PC-9 (cell line): ENCODE measurements at regions of chr6 and their contacts with region 1.

Region 1: GRCh38 chr6:4313044-4313686 is 177.8 kb upstream of the ECI2 start:
- DNase-seq: peak; percentile 79 to 83
- H3K4me3 ChIP-seq: no peak overlapping the region
- H3K27ac ChIP-seq: peak overlapping the region; percentile 91
- H3K4me1 ChIP-seq: peaks cover 28% of the 10 kb centered on the region
- H3K27me3 ChIP-seq: no peaks in the 10 kb centered on the region
- CTCF ChIP-seq: peak; percentile 67

Region 2: DNA sequence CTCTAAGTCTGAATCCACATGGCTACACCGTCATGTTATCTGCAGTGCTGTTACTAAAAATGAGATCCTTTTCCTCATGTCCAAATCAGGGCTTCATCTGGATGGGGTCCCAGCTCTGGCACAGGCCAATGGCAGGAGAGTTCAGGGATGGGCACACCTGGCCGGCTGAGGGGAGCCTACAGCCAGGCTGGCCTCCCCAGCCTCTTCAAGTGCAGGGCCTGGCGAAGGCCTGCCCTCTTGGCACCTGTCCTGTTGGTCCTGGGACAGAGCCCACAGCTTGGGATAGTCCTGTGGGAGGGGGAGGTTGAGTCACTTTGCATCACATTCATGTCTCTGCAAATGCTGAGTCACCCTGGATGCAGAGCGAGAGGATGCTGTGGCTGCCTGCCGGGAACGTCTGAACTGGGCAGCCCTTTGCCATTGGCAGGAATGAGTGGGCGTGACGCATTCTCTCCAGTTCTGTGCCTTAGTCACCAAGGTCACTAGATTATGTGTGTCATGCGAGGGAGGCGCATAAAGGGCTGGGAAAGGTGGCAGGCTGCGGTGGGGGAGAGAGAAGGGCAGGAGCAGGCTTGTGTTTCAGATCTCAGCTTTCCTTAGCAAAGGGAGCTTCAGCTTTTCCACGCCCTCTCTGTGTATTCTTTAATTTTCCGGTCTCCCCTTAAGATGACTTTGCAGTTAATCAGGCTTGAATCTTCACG is 45.4 kb after region 1 on chr6:
- CTCF ChIA-PET with region 1: no interaction called
- POLR2A ChIA-PET with region 1: interaction called, 3 read pairs
- intact Hi-C with region 1: loop called (anchors 2 kb)
- DNase-seq: peak; percentile 98
- H3K4me3 ChIP-seq: peak overlapping the region; percentile 49; the same call in 1 of the 2 replicates
- H3K27ac ChIP-seq: peak overlapping the region; percentile 100
- H3K4me1 ChIP-seq: peaks cover 55% of the 10 kb centered on the region
- H3K27me3 ChIP-seq: no peaks in the 10 kb centered on the region
- CTCF ChIP-seq: no peak

Region 3: DNA sequence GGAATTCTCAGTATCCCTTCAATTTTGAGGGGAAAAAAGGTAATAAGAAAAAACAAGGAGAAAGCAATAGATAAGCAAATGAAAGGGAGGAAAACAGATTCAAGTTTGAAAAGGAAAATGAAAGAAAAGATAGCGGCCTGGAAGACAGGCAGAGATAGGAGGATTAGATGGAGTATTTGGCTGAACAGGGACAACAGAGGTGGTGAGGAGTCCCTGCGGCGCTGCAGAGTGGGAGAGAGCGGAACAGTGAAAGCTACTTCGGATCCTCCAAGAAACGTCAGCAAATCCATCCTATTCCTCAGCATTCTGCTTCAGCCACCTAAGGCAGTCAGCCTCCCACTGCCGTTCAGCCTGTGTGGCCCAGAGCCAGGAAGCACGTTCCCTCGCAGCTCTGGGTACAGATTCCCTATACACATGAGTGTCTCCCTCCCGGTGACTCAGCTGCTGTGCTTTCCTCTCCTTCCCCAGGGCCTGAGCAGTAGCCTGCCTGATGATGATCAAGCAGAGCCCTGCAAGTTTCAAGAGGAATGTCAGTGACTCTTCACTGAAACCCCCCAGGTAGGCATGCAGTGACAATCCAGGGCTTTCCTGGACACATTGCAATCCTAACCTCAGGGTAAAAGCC is 419.6 kb after region 1 on chr6:
- CTCF ChIA-PET with region 1: no interaction called
- POLR2A ChIA-PET with region 1: no interaction called
- intact Hi-C with region 1: loop called (anchors 5 kb)
- DNase-seq: peak; percentile 84
- H3K4me3 ChIP-seq: peak overlapping the region; percentile 12; the same call in 1 of the 2 replicates
- H3K27ac ChIP-seq: peak overlapping the region; percentile 91
- H3K4me1 ChIP-seq: peaks cover 38% of the 10 kb centered on the region
- H3K27me3 ChIP-seq: no peaks in the 10 kb centered on the region
- CTCF ChIP-seq: no peak

Region 4: GRCh38 chr6:4936681-4937041 is 623.5 kb after region 1 on chr6:
- CTCF ChIA-PET with region 1: interaction called, 3 read pairs
- POLR2A ChIA-PET with region 1: no interaction called
- intact Hi-C with region 1: loop called (anchors 1 kb)
- DNase-seq: no peak
- H3K4me3 ChIP-seq: no peak overlapping the region
- H3K27ac ChIP-seq: no peak overlapping the region
- H3K4me1 ChIP-seq: peaks cover 24% of the 10 kb centered on the region
- H3K27me3 ChIP-seq: no peaks in the 10 kb centered on the region
- CTCF ChIP-seq: peak; percentile 71

Region 5: DNA sequence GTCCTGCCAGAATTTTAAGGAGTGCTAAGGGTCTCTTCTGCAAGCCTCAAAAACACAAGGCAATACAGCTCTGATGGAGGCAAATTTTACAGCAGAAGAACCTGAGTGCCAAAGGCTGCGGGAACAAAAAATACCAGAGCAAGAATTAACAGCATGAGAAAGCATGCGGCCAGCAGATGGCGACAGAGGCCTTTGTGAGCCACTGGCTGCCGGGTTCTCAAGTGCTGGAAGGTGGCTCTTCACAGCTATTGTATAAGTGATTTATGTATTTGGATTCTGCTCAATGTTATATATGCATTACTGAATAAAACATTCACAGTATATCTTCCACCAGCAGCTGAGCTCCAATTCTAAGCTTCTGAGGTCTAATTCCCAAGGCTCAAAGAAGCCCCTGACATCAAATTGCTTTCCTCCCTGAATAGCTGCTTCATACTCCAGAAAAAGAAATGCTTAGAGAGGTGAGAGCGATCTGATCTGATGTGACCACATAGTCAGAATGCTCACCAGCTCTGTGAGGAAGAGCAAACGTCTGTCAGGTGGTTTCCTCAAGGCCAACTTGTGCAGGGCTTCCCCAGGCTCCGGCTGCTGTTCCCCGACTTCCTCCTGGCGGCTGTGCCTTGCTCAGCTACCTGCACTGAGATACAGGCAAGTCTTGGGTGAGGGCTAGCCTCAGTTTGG is 830.6 kb after region 1 on chr6:
- CTCF ChIA-PET with region 1: no interaction called
- POLR2A ChIA-PET with region 1: no interaction called
- intact Hi-C with region 1: loop called (anchors 5 kb)
- DNase-seq: peak; percentile 46 to 77
- H3K4me3 ChIP-seq: no peak overlapping the region
- H3K27ac ChIP-seq: no peak overlapping the region
- H3K4me1 ChIP-seq: no peaks in the 10 kb centered on the region
- H3K27me3 ChIP-seq: no peaks in the 10 kb centered on the region
- CTCF ChIP-seq: peak; percentile 85